BJ (cell line): ENCODE measurements at regions of chr7 and their contacts with region 1.

Region 1: DNA sequence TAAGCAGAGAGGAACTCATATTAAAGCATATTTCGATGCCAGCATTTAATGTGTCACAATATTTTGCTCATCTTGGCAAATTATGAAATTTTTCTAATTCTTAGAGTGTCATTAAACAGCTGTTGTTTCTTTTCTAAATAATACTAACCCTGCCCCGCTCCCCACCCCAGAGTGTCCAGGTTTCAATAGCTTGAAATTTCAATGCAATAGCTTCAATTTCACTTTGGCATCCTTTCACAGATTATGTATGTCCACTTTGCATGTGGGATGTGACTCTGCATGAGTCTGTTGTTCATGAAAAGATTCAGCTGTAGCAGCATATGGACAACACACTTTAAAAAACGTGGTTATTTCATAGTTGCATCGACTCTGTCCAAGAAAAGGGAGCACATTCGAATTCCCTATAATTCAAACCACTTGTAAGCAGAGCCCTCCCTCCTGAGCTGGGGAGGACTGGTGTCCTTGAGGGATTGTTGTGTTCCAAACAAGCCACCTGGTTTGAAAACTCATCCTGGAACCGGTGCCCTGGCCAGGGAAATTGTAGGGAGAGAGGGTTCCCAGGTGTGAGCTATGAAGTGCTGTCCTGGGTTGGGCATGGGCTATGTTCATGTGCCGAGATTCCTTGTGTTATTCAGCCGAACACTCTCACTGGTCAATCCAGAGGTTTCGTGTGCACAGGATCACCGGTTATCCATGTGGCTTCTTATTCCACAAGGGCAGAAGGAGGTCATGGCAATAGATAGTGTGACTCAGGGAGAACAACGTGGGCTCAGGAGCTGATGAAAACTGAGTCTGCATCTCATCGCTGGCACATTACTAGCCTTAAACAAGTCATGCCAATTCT is 64.6 kb upstream of the CREB5 start:
- DNase-seq: peak; percentile 11
- H3K4me3 ChIP-seq: no peak overlapping the region
- H3K27me3 ChIP-seq: peaks cover 13% of the 10 kb centered on the region
- CTCF ChIP-seq: no peak

Region 2: GRCh38 chr7:28316489-28316888 is 31.2 kb before region 1 on chr7:
- CTCF ChIA-PET with region 1: no interaction called
- POLR2A ChIA-PET with region 1: no interaction called
- DNase-seq: no peak
- H3K4me3 ChIP-seq: no peak overlapping the region
- H3K27me3 ChIP-seq: peaks cover 17% of the 10 kb centered on the region
- CTCF ChIP-seq: no peak

Region 3: DNA sequence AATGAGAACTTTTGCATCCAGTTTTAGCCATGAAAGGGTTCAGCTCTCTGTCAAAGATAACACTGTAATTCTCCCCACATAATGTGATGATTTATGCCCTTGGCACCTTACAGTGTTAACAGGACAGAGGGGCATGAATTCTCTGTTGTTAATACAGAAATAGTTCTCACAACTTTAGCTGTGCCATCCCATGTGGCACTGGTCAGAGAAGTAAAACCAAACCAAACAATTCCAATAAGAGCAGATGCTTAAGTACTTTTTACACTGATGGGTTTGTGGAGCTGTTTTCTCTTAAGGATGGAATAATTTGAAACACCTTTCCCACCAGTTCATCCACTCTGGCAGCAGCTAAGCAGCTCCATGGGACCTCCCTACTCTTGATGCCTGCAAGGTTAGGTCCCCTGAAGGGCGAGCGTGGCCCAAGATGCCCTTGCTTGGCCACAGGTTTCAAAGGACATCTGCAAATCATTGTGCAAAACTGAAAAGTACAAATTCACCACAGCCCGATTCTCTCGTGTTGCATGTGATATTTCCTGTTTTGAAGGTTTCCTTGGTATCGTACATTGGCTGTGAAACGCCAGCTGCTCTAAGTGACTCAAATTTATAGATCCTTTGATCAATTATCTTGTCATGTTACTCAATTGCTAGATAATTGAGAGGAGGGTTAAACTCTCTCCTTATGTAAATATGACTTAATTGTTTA is 17.9 kb before region 1 on chr7:
- CTCF ChIA-PET with region 1: no interaction called
- POLR2A ChIA-PET with region 1: no interaction called
- DNase-seq: no peak
- H3K4me3 ChIP-seq: no peak overlapping the region
- H3K27me3 ChIP-seq: peaks cover 4% of the 10 kb centered on the region
- CTCF ChIP-seq: no peak

Region 4: DNA sequence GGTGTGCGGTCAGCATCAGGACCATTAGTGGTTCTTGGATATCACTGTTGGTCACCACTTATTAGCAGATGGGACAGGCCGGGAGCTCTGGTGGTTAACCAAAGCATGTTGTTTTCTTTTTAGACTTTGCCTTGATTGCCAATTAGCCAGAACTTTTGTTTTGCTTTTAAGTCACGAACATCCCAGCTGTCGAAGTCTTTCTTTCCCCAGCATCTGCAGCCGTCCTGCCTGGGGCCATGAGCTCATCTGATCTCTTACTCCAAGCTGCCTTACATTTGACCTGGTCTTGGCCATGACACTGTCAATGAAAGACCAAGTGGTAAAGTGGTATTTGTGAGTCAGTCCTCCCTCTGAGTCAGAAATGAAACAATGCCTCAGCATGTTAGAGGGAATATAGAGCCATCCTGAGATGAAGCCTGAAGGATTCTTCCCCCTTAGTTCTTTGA is 10.7 kb after region 1 on chr7:
- CTCF ChIA-PET with region 1: interaction called, 14 read pairs
- POLR2A ChIA-PET with region 1: interaction called, 4 read pairs
- DNase-seq: peak; percentile 96
- H3K4me3 ChIP-seq: no peak overlapping the region
- H3K27me3 ChIP-seq: peaks cover 13% of the 10 kb centered on the region
- CTCF ChIP-seq: no peak